GM12878 (cell line): ENCODE measurements at regions of chr2 and their contacts with region 1.

Region 1: DNA sequence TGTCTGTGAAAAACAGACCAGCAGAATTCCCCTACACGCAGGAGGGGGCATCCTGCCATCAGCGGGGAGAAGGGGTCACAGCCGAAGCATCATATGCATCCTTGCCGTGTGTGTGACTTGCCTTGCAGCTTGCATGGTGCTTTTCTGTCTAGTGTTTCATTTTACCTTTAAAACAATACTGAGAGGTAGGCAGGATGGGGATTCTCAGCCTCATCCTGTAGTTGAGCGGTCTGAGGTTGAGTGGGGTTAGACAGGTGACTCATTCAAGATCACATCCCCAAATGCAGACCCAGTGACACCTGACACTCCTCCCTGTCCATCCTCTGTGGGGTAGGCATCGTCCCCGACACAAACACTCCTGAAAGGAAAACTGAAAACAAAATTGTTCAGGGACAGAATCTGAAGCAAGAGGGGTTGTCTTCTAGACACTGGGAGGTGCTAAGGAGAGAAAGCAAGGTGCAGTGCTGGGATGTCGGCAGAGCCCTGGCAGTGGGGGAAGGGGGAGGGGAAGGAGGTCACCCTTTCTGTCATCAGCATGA is 7.9 kb downstream of the ARL4C start:
- DNase-seq: peak; percentile 51
- ATAC-seq: peak; percentile 77
- H3K4me3 ChIP-seq: no peak overlapping the region
- H3K27ac ChIP-seq: no peak overlapping the region
- H3K4me1 ChIP-seq: peaks cover 16% of the 10 kb centered on the region
- H3K27me3 ChIP-seq: no peaks in the 10 kb centered on the region
- CTCF ChIP-seq: no peak
- EP300 ChIP-seq: no peak
- POLR2A ChIP-seq: no peak
- RAD21 ChIP-seq: no peak

Region 2: GRCh38 chr2:234308813-234309195 is 180.2 kb before region 1 on chr2:
- CTCF ChIA-PET with region 1: no interaction called
- POLR2A ChIA-PET with region 1: no interaction called
- RAD21 ChIA-PET with region 1: no interaction called
- SMC1A ChIA-PET with region 1: interaction called, 3 read pairs
- in situ Hi-C with region 1: loop called (anchors 5 kb)
- intact Hi-C with region 1: no loop called
- DNase-seq: peak; percentile 71
- ATAC-seq: peak; percentile 90
- H3K4me3 ChIP-seq: no peak overlapping the region
- H3K27ac ChIP-seq: 0 out of 2 replicates have a peak overlapping the region, but pooled peaks have one; percentile 1
- H3K4me1 ChIP-seq: peaks cover 6% of the 10 kb centered on the region; the same call in 1 of the 2 replicates
- H3K27me3 ChIP-seq: no peaks in the 10 kb centered on the region
- CTCF ChIP-seq: no peak
- EP300 ChIP-seq: peak; percentile 83 to 90; a peak in 2 of 4 replicates
- POLR2A ChIP-seq: no peak
- RAD21 ChIP-seq: no peak

Region 3: DNA sequence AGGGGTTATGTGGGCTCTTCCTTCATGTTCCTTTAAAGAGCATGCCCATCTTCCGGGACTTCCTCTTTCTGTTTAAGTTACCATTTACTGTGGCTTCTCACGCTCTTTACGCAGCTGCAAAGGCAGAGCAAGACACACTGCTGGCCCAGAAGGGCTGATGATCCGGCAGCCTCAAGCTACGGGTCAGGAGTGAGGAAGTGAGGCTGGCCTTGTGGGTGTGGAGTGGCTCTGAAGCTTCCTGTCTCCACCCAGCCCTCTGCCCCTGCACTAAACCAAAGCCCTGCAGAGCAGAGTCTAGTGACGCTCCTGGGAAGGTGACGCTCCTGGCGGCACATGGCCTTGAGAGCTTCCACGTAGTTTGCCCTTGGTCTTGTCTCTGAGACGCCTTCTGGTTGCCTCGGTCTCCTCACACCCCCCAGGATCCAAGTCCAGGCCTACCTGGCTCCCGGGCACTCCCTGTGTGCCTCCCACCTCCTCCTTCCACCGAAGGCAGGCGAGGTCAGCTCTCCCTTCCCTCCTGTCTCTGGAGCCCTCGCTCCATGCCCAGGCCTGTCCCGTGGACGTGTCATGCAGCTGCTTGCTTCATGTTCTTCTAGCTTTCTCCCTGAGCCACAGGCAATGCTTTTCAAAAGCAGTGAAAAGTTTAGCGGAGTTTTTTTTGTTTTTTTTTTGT is 42.4 kb before region 1 on chr2:
- CTCF ChIA-PET with region 1: no interaction called
- POLR2A ChIA-PET with region 1: no interaction called
- RAD21 ChIA-PET with region 1: no interaction called
- SMC1A ChIA-PET with region 1: interaction called, 3 read pairs
- in situ Hi-C with region 1: no loop called
- intact Hi-C with region 1: loop called (anchors 2 kb)
- DNase-seq: peak; percentile 66
- ATAC-seq: peak; percentile 94
- H3K4me3 ChIP-seq: no peak overlapping the region
- H3K27ac ChIP-seq: peak overlapping the region; percentile 45
- H3K4me1 ChIP-seq: peaks cover 14% of the 10 kb centered on the region
- H3K27me3 ChIP-seq: no peaks in the 10 kb centered on the region
- CTCF ChIP-seq: no peak
- EP300 ChIP-seq: no peak
- POLR2A ChIP-seq: peak; percentile 47; the same call in 1 of the 2 replicates
- RAD21 ChIP-seq: no peak